Psoas muscle (tissue), 8 donors: ENCODE measurements at regions of chr6 and their contacts with region 1.

Region 1: DNA sequence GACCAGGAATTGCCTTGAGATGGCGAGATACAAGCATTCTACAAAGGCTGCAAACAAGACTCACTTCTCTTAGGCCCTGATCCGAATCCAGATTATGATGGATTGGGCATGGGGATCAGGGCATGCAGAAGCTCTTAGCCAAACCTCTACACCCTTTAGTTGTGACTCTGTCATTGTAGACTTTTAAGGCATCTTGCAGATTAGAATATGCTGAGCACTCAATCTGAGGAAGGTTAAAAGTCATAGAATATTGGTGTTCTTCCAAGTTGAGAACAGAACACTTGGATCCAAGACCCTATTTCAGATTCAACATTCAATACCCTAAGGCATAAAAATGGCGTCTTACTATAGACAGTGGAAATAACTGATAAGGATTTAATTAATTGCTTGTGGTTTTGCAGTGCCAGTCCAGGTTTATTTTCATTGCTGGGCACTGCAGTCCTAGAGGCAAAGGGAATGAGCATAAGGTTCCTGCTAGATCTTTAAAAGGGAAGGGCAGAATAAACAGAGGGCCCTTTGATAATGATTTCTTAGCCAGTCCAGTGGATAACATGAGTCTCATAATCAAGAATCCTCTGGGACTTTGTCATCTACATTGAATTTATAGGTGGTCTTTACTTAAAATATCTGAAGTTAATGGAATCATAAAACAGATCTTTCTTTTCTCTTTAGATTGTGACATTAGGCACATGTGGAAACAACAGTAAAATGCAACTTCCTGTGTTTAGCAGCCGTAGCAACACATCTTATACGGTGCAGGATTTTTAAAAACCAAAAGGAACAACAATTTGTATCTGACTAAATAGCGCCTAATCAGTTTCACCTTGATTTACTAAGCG is 17.6 kb downstream of the PHACTR2 start:
- DNase-seq: no peak
- ATAC-seq: no peak
- H3K4me3 ChIP-seq: no peak overlapping the region
- H3K27ac ChIP-seq: peak overlapping the region; percentile 44
- H3K4me1 ChIP-seq: peaks cover 58% of the 10 kb centered on the region
- H3K27me3 ChIP-seq: no peaks in the 10 kb centered on the region
- CTCF ChIP-seq: no peak

Region 2: GRCh38 chr6:143490775-143491174 is 204.6 kb before region 1 on chr6:
- intact Hi-C with region 1: no loop called
- DNase-seq: no peak
- ATAC-seq: no peak
- H3K4me3 ChIP-seq: no peak overlapping the region
- H3K27ac ChIP-seq: no peak overlapping the region
- H3K4me1 ChIP-seq: no peaks in the 10 kb centered on the region
- H3K27me3 ChIP-seq: no peaks in the 10 kb centered on the region
- CTCF ChIP-seq: no peak

Region 3: DNA sequence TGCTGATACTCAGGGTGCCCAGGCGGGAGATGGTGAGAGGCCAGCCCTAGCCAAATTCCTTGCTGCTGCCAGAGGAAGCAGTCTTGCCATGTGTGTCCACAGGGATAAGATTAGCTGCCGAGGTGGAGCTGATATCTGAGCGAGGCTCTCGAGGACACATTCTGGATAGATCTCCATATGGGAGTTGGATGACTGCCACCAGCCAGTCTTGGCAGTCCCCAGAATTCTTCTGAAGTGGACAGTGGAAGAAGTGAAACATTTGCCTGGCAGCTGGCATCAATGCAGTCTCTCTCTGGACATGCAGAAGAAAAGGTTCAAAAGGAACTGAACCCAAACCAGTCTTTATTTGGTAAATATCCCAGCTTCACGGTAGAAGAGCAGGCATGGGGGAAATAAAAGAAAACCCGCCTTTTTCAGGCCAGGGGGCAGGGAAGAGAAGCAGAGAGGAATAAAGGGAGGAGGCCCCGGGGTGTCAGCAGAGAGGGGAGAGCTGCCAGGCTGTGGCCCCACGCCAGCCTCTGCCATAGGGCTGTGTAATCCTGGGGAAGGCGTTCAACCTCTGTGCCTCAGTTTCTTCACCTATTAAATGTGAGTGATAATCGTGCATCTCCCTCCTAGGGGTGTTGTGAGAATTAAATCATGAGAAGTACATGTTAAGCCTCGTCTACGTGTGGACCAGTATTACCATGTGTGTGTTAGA is 180.1 kb before region 1 on chr6:
- intact Hi-C with region 1: no loop called
- DNase-seq: peak; percentile 35 to 55
- ATAC-seq: peak; percentile 36 to 61 (median 48)
- H3K4me3 ChIP-seq: no peak overlapping the region
- H3K27ac ChIP-seq: no peak overlapping the region
- H3K4me1 ChIP-seq: peaks cover 16% of the 10 kb centered on the region
- H3K27me3 ChIP-seq: no peaks in the 10 kb centered on the region
- CTCF ChIP-seq: no peak

Region 4: DNA sequence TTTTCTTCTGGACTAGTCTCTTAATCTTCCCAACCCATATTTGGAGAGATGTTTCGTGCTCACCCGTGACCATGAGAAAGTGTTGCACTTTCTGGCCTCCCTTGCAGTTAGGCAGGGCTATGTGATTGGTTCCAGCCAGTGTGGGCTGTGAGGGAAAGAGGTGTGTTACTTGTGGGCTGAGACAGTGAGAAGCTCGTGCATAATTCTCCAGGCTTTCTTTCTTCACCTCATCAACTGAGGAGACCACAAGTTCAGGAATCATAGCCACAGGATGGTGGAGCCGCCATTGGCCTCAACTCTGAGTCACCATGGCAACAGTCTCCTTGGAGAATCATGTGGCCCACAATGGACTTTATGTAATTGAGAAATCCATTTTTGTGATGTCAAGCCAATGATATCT is 126.3 kb before region 1 on chr6:
- intact Hi-C with region 1: no loop called
- DNase-seq: no peak
- ATAC-seq: peak in 1 of 4 donors; percentile 16
- H3K4me3 ChIP-seq: no peak overlapping the region
- H3K27ac ChIP-seq: no peak overlapping the region
- H3K4me1 ChIP-seq: no peaks in the 10 kb centered on the region
- H3K27me3 ChIP-seq: no peaks in the 10 kb centered on the region
- CTCF ChIP-seq: no peak

Region 5: DNA sequence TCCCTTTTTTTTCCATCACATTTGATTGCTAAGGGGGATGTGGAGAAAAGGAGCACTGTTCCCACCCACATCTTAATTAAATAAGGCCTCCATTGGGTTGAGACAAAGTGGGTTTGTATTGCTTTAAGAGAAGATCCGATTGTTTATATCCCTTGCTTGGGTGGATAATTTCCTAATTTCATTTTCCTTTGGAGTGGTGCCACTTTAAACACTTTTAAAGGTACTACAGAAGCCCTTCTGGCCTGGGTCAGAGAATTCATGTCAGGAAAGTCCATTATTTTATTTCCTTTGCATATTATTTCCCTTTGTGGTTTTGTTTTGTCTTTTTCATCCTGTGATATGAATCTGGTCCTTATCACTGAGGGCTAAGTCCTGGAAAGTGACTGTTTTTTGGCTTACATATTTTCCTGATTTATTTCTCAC is 39.3 kb after region 1 on chr6:
- intact Hi-C with region 1: loop called in 1 of 2 experiments (anchors 5 kb)
- DNase-seq: no peak
- ATAC-seq: no peak
- H3K4me3 ChIP-seq: no peak overlapping the region
- H3K27ac ChIP-seq: no peak overlapping the region
- H3K4me1 ChIP-seq: peaks cover 22% of the 10 kb centered on the region
- H3K27me3 ChIP-seq: no peaks in the 10 kb centered on the region
- CTCF ChIP-seq: no peak

Region 6: GRCh38 chr6:143912671-143913070 is 217.3 kb after region 1 on chr6:
- intact Hi-C with region 1: no loop called
- DNase-seq: no peak
- ATAC-seq: no peak
- H3K4me3 ChIP-seq: no peak overlapping the region
- H3K27ac ChIP-seq: no peak overlapping the region
- H3K4me1 ChIP-seq: no peaks in the 10 kb centered on the region
- H3K27me3 ChIP-seq: no peaks in the 10 kb centered on the region
- CTCF ChIP-seq: no peak